ENCODE measurements at regions of chr1 and their contacts with region 1.

Region 1: DNA sequence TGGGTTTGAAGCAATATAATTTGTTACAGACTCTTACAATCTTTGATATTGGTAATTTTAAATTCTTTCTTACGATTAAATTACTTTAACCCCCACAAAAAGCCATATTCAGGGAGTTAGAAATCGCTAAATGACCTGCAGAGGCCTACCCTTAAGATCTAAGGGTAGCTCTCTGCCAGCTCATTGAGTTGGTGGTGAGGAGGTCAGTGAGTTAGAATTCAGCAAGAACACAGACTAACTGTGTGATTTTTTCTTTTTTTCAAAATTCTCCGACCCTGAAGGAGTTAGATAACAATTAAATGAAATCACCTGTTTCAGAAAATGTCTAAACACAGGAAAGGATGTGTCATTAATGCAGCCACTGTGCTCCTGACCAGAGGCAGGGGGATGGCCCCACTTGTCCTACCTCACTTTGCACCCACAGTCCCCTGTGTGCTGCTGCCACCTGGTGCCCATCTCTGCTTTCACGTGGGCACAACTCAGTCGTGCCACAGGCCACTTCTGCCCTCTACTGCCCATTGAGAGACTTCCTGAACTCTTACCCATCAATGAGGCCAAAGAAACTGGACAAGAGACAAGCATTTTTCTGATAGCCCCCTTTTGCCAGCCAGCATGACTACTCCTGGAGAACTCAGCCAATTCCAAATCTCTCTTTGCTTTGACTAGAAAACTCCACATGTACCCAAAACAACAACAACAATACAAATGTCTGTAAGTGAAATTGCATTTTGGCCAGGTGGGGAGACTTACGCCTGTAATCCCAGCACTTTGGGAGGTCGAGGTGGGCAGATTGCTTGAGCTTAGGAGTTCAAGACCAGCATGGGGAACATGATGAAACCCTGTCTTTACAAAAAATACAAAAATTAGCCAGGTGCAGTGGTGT is 8.4 kb downstream of the CFAP45 start:
- H3K4me3 ChIP-seq: no peak overlapping the region
- H3K27ac ChIP-seq: no peak overlapping the region
- H3K4me1 ChIP-seq: no peaks in the 10 kb centered on the region
- CTCF ChIP-seq: peak; percentile 99

Region 2: GRCh38 chr1:159161001-159161718 is 730.4 kb before region 1 on chr1:
- CTCF ChIA-PET with region 1: interaction called, 15 read pairs
- POLR2A ChIA-PET with region 1: no interaction called
- H3K4me3 ChIP-seq: no peak overlapping the region
- H3K27ac ChIP-seq: no peak overlapping the region
- H3K4me1 ChIP-seq: no peaks in the 10 kb centered on the region
- CTCF ChIP-seq: peak; percentile 97

Region 3: DNA sequence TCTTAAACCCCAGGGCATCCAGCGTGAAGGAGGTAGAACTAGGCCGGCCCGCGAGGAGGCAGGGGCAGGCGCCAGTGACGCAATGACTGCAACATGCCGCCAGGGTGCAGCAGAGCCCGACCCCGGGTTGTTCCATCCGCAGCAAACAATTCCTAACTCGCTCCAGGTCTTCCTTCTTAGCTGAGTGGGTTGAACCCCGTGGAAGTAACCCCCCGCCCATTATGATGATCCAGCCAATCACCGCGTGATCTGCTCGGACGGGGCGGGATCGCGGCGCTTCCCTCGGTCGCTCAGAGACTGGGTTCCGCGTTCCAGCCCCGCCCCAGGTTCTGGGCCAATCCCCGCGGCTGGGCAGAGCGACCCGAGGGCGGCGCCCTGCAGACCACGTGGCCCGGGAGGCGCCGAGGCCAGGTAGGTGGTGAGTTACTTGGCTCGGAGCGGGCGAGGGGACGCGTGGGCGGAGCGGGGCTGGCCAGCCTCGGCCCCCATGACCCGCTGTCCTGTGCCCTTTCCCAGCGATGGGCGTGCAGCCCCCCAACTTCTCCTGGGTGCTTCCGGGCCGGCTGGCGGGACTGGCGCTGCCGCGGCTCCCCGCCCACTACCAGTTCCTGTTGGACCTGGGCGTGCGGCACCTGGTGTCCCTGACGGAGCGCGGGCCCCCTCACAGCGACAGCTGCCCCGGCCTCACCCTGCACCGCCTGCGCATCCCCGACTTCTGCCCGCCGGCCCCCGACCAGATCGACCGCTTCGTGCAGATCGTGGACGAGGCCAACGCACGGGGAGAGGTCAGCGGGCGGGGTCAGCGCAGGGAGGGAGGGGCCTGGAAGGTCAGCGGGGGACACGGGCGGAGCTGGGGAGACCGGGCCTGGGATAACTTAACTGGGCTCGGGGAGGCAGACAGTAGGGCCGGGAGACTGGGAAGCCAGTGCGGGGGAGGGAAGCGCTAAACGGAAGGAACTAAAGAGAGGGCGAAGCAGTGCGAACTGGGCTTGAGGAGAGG is 110.6 kb before region 1 on chr1 and contains the start of gene DUSP23:
- CTCF ChIA-PET with region 1: interaction called, 32 read pairs
- POLR2A ChIA-PET with region 1: no interaction called
- H3K4me3 ChIP-seq: no peak within 1 kb of the TSS
- H3K27ac ChIP-seq: no peak within 1 kb of the TSS
- H3K4me1 ChIP-seq: no peaks in the 10 kb centered on the region
- CTCF ChIP-seq: no peak

Region 4: DNA sequence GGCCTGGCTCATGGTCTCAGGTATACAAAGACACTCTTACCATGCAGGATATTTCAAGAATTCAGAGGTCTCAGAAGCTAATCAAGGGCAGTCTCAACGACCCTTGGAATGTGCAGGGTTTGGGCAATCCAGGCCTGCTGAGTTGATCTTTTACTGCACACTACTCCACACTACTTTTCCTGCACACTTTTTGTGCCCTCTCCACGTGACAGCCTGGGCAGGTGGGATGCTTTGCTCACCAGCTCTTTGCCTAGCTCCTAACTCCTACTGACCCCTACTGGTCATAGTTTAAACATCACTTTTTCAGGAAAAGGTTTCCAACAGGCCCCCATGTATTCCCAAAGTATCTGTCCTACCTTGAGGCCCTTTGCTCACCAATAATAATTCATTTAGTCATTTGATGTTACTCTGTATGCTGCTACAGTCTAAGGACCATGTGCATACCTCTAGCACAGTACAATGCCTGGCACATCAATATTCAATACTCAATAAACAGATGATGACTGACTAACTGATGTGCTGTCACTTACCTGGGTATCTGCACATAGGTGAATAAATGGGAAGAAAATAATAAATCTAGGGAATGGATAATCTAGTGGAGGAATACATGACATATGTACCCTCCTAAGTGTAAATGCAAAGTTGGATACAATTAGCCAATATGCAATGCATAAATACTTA is 101.1 kb before region 1 on chr1:
- CTCF ChIA-PET with region 1: interaction called, 415 read pairs
- POLR2A ChIA-PET with region 1: no interaction called
- H3K4me3 ChIP-seq: no peak overlapping the region
- H3K27ac ChIP-seq: no peak overlapping the region
- H3K4me1 ChIP-seq: 0 out of 2 replicates have a peak, but pooled peaks cover 4% of the 10 kb centered on the region
- CTCF ChIP-seq: no peak

Region 5: GRCh38 chr1:159839116-159839849 is 52.2 kb before region 1 on chr1:
- CTCF ChIA-PET with region 1: interaction called, 19 read pairs
- POLR2A ChIA-PET with region 1: no interaction called
- H3K4me3 ChIP-seq: no peak overlapping the region
- H3K27ac ChIP-seq: no peak overlapping the region
- H3K4me1 ChIP-seq: no peaks in the 10 kb centered on the region
- CTCF ChIP-seq: no peak

Region 6: GRCh38 chr1:159916184-159917051 is 24.9 kb after region 1 on chr1:
- CTCF ChIA-PET with region 1: interaction called, 6 read pairs
- POLR2A ChIA-PET with region 1: interaction called, 10 read pairs
- H3K4me3 ChIP-seq: no peak overlapping the region
- H3K27ac ChIP-seq: peak overlapping the region; percentile 81
- H3K4me1 ChIP-seq: peaks cover 24% of the 10 kb centered on the region
- CTCF ChIP-seq: peak; percentile 35; the same call in 1 of the 2 replicates

Region 7: GRCh38 chr1:159924981-159925712 is 33.6 kb after region 1 on chr1 and contains the start of gene TAGLN2:
- CTCF ChIA-PET with region 1: interaction called, 23 read pairs
- POLR2A ChIA-PET with region 1: interaction called, 14 read pairs
- H3K4me3 ChIP-seq: peak within 1 kb of the TSS; percentile 64
- H3K27ac ChIP-seq: peak within 1 kb of the TSS; percentile 95
- H3K4me1 ChIP-seq: peaks cover 13% of the 10 kb centered on the region
- CTCF ChIP-seq: peak; percentile 4; the same call in 1 of the 2 replicates